ENCODE measurements at regions of chr4 and their contacts with region 1.

Region 1: DNA sequence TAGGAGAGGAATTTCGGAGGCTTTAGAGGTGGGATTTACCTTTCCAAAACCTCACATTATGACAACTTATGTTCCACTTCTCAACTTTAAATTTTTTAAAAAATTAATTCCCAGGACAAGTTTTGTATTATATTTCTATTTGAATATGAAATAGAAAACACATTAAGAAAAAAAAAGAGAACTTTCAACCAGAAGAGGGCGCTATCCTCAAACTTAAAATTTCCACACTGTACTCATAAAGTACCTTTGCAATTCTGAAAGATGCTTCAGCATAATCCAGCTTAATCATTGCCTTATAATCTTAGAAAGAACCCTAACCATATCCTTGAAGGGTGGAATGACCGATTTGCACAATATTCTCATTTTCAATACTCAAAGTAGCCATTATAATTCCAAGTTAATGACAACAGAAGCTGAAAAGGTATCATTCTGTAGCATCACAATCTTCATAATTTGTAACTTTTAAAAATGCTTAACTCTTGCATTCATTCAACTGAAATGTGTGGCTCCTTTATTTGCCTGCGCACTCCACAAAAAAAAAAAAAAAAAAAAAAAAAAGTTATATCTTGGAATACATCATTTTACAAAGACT is 158.0 kb downstream of the KCNIP4 start:
- DNase-seq: peak in 2 of 9 experiments; percentile 8 to 22
- ATAC-seq: no peak
- H3K4me3 ChIP-seq: no peak overlapping the region
- H3K4me3 Mint-ChIP-seq: no peak overlapping the region
- H3K27ac ChIP-seq: no peak overlapping the region
- H3K27ac Mint-ChIP-seq: no peak overlapping the region
- H3K4me1 ChIP-seq: no peaks in the 10 kb centered on the region
- H3K4me1 Mint-ChIP-seq: peaks cover 3% of the 10 kb centered on the region
- H3K27me3 ChIP-seq: no peaks in the 10 kb centered on the region
- H3K27me3 Mint-ChIP-seq: peaks cover 7% of the 10 kb centered on the region
- CTCF ChIP-seq: peak; percentile 47

Region 2: DNA sequence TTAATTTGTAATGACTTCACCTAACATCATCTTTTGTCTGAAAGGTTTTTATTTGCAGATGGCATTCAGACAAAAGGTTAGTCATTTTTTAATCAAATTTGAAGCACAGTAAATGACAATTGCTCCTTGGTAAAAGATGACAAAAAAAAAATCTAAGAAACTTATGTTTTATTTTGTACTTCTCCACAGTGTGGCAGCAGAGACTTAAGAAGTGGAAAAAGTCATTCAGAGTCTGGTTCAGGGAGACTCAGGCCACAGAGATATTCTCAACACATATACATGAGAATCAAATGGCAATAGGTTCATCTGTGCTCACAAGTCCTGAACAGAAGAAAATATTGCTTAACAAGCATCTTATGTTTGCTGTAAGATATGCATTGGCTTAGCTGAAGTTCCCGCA is 278.2 kb before region 1 on chr4:
- CTCF ChIA-PET with region 1: no interaction called
- POLR2A ChIA-PET with region 1: no interaction called
- intact Hi-C with region 1: no loop called
- DNase-seq: no peak
- ATAC-seq: no peak
- H3K4me3 ChIP-seq: no peak overlapping the region
- H3K4me3 Mint-ChIP-seq: no peak overlapping the region
- H3K27ac ChIP-seq: no peak overlapping the region
- H3K27ac Mint-ChIP-seq: no peak overlapping the region
- H3K4me1 ChIP-seq: no peaks in the 10 kb centered on the region
- H3K4me1 Mint-ChIP-seq: no peaks in the 10 kb centered on the region
- H3K27me3 ChIP-seq: no peaks in the 10 kb centered on the region
- H3K27me3 Mint-ChIP-seq: no peaks in the 10 kb centered on the region
- CTCF ChIP-seq: no peak

Region 3: DNA sequence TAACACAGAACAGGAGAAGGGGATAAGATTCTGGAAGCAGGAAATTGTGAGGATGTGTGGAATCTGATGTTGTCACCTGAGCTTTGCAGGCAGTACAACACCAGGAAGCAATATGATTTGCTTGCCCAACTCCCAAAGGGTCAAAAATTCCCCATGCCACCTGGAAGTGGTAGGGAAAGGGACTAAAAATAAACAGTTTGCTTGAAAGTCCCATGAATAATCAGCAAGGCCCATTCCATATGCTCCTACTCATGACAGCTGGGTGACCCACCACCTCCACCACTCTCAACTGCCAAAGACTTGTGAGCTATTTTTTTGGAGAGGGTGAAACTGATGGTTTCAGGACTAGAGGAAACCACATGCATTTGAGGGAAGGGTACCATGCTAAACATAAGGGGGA is 10.4 kb before region 1 on chr4:
- CTCF ChIA-PET with region 1: interaction called, 10 read pairs
- POLR2A ChIA-PET with region 1: no interaction called
- intact Hi-C with region 1: no loop called
- DNase-seq: no peak
- ATAC-seq: no peak
- H3K4me3 ChIP-seq: no peak overlapping the region
- H3K4me3 Mint-ChIP-seq: no peak overlapping the region
- H3K27ac ChIP-seq: no peak overlapping the region
- H3K27ac Mint-ChIP-seq: no peak overlapping the region
- H3K4me1 ChIP-seq: no peaks in the 10 kb centered on the region
- H3K4me1 Mint-ChIP-seq: no peaks in the 10 kb centered on the region
- H3K27me3 ChIP-seq: no peaks in the 10 kb centered on the region
- H3K27me3 Mint-ChIP-seq: peaks cover 3% of the 10 kb centered on the region
- CTCF ChIP-seq: no peak

Region 4: DNA sequence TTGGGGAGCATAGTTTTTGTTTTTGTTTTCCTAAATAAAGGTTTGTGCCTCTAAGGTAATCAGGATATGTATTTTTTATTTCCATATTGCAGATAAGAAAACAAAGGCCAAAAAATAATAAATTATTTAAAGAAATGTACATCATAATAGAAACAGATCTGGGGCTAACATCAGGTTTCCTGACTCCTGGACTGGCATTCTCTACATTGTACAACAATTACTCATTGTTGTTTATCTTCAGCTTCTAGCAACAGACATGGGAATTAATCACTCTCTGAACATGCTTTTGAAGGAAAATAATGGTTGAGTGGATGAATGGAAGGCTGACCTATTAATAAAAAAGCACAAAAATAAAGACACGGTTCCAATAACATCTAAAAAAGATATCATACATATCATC is 11.9 kb after region 1 on chr4:
- CTCF ChIA-PET with region 1: interaction called, 14 read pairs
- POLR2A ChIA-PET with region 1: no interaction called
- intact Hi-C with region 1: no loop called
- DNase-seq: no peak
- ATAC-seq: no peak
- H3K4me3 ChIP-seq: no peak overlapping the region
- H3K4me3 Mint-ChIP-seq: no peak overlapping the region
- H3K27ac ChIP-seq: no peak overlapping the region
- H3K27ac Mint-ChIP-seq: no peak overlapping the region
- H3K4me1 ChIP-seq: no peaks in the 10 kb centered on the region
- H3K4me1 Mint-ChIP-seq: no peaks in the 10 kb centered on the region
- H3K27me3 ChIP-seq: no peaks in the 10 kb centered on the region
- H3K27me3 Mint-ChIP-seq: no peaks in the 10 kb centered on the region
- CTCF ChIP-seq: no peak

Region 5: GRCh38 chr4:21921526-21922180 is 131.1 kb after region 1 on chr4:
- CTCF ChIA-PET with region 1: no interaction called
- POLR2A ChIA-PET with region 1: no interaction called
- intact Hi-C with region 1: loop called in 1 of 2 experiments (anchors 10 kb)
- DNase-seq: no peak
- ATAC-seq: no peak
- H3K4me3 ChIP-seq: no peak overlapping the region
- H3K4me3 Mint-ChIP-seq: no peak overlapping the region
- H3K27ac ChIP-seq: no peak overlapping the region
- H3K27ac Mint-ChIP-seq: no peak overlapping the region
- H3K4me1 ChIP-seq: no peaks in the 10 kb centered on the region
- H3K4me1 Mint-ChIP-seq: no peaks in the 10 kb centered on the region
- H3K27me3 ChIP-seq: no peaks in the 10 kb centered on the region
- H3K27me3 Mint-ChIP-seq: no peaks in the 10 kb centered on the region
- CTCF ChIP-seq: no peak

Region 6: DNA sequence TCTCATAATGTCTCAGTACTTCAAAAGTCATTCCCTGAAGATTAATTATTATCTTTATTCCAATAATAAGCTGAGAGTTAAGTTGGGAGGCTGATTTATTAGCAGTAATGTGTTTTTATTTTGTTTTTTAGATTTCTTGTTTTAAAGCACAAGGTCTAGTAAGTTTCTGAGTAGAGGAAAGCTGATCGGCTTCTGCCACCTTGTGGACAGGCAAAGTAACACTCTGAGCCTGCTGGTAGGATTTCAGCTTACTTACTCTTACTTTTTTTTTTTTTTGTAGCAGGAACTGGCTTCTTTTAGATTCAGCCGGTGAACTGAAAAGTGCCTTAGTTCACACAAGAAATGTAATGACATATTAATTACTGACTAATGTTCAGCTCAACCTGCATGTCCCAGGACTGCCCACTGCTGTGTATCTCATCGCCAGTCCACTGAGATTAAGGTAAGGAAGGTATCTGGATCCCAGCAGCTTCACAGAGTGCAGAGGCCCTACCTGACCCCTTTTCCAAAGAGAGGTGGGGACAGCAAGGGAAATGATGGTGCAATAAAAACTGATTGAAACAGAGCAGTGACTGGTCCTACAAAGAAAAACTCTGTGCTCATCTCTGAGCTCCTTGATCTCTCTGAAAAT is 598.8 kb after region 1 on chr4:
- CTCF ChIA-PET with region 1: interaction called, 51 read pairs
- POLR2A ChIA-PET with region 1: no interaction called
- intact Hi-C with region 1: loop called (anchors 1 kb)
- DNase-seq: peak in 6 of 9 experiments; percentile 4 to 59 (median 26)
- ATAC-seq: peak; percentile 59
- H3K4me3 ChIP-seq: no peak overlapping the region
- H3K4me3 Mint-ChIP-seq: no peak overlapping the region
- H3K27ac ChIP-seq: no peak overlapping the region
- H3K27ac Mint-ChIP-seq: no peak overlapping the region
- H3K4me1 ChIP-seq: no peaks in the 10 kb centered on the region
- H3K4me1 Mint-ChIP-seq: no peaks in the 10 kb centered on the region
- H3K27me3 ChIP-seq: no peaks in the 10 kb centered on the region
- H3K27me3 Mint-ChIP-seq: no peaks in the 10 kb centered on the region
- CTCF ChIP-seq: peak; percentile 51

Region 7: GRCh38 chr4:22607382-22607781 is 816.8 kb after region 1 on chr4:
- CTCF ChIA-PET with region 1: no interaction called
- POLR2A ChIA-PET with region 1: no interaction called
- intact Hi-C with region 1: loop called in 1 of 2 experiments (anchors 5 kb)
- DNase-seq: peak in 8 of 9 experiments; percentile 11 to 65 (median 40)
- ATAC-seq: peak; percentile 99
- H3K4me3 ChIP-seq: no peak overlapping the region
- H3K4me3 Mint-ChIP-seq: no peak overlapping the region
- H3K27ac ChIP-seq: no peak overlapping the region
- H3K27ac Mint-ChIP-seq: peak overlapping the region; percentile 20
- H3K4me1 ChIP-seq: peaks cover 13% of the 10 kb centered on the region
- H3K4me1 Mint-ChIP-seq: peaks cover 40% of the 10 kb centered on the region
- H3K27me3 ChIP-seq: no peaks in the 10 kb centered on the region
- H3K27me3 Mint-ChIP-seq: no peaks in the 10 kb centered on the region
- CTCF ChIP-seq: peak; percentile 43

Region 8: DNA sequence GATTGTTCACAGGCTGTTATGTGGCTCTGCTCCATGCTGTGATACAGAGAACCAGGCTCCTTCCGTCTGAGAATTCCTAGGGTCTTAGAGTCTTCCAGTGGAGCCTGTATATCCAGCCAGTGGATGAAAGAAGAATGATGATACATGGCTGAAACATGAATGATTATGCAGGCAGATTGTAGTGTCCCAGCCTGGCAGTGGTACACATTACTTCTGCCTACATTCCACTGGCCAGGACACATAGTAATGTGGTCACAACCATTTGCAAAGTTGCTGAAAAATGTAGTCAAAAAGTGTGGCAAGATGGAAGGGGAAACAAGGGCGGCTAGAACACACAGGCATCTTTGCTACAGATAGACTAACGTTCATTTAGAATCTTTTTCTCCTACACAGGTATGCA is 897.7 kb after region 1 on chr4:
- CTCF ChIA-PET with region 1: no interaction called
- POLR2A ChIA-PET with region 1: no interaction called
- intact Hi-C with region 1: loop called in 1 of 2 experiments (anchors 2 kb)
- DNase-seq: no peak
- ATAC-seq: no peak
- H3K4me3 ChIP-seq: no peak overlapping the region
- H3K4me3 Mint-ChIP-seq: no peak overlapping the region
- H3K27ac ChIP-seq: no peak overlapping the region
- H3K27ac Mint-ChIP-seq: no peak overlapping the region
- H3K4me1 ChIP-seq: peaks cover 8% of the 10 kb centered on the region
- H3K4me1 Mint-ChIP-seq: peaks cover 17% of the 10 kb centered on the region
- H3K27me3 ChIP-seq: no peaks in the 10 kb centered on the region
- H3K27me3 Mint-ChIP-seq: no peaks in the 10 kb centered on the region
- CTCF ChIP-seq: no peak